Keratinocyte (primary cell): ENCODE measurements at regions of chr6 and their contacts with region 1.

Region 1: DNA sequence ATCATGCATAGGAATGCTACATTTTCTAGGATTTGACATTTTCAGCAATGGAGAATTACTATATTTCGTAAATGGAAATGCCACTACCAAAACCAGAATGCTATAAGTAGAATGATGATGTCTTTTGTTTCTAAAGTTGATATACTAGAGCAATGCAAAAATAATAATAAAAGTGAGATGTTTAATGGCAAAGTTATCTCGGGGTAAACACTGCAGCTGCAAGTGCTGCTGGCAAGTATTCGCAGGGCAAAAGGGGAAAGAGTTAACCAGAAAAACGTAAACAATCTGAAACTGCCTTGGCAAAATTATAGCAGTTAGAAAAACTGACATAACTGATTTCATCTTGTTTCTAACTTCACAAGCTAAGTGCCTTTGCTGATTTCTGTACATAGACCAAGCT is 45.5 kb upstream of the FILIP1 start:
- DNase-seq: no peak
- H3K4me3 ChIP-seq: no peak overlapping the region
- H3K27ac ChIP-seq: no peak overlapping the region
- H3K4me1 ChIP-seq: no peaks in the 10 kb centered on the region
- H3K27me3 ChIP-seq: peaks cover 4% of the 10 kb centered on the region
- CTCF ChIP-seq: no peak

Region 2: GRCh38 chr6:75504465-75505228 is 34.5 kb before region 1 on chr6:
- dilution Hi-C with region 1: loop called (anchors 5 kb)
- DNase-seq: no peak
- H3K4me3 ChIP-seq: no peak overlapping the region
- H3K27ac ChIP-seq: no peak overlapping the region
- H3K4me1 ChIP-seq: no peaks in the 10 kb centered on the region
- H3K27me3 ChIP-seq: no peaks in the 10 kb centered on the region
- CTCF ChIP-seq: peak in 2 of 3 experiments; percentile 23 to 35

Region 3: DNA sequence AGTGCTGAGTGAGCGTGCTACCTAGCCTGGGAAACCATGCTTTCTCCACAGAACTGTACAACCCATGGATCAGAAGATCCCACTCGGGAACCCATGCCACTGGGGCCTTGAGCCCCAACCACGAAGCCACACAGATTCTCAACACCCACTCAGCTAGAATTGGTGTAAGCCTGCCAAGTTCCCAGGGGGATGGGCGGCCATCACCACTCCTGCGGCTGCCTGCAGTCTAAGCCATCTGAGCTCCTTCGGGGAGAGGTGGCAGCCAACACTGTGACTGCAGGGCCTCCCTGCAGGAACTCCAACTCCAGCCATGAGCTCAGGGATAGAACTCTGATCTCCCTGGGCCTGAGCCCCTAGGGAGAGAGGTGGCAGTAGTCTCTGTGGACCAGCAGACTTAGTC is 29.0 kb after region 1 on chr6:
- dilution Hi-C with region 1: no loop called
- DNase-seq: no peak
- H3K4me3 ChIP-seq: no peak overlapping the region
- H3K27ac ChIP-seq: no peak overlapping the region
- H3K4me1 ChIP-seq: no peaks in the 10 kb centered on the region
- H3K27me3 ChIP-seq: no peaks in the 10 kb centered on the region
- CTCF ChIP-seq: no peak